CD4-positive, alpha-beta T cell (primary cell): ENCODE measurements at regions of chr19 and their contacts with region 1.

Region 1: GRCh38 chr19:15466851-15467733 is 2.7 kb upstream of the RASAL3 start:
- DNase-seq: peak in 13 of 14 experiments; percentile 31 to 87 (median 59)
- ATAC-seq: peak; percentile 43
- H3K4me3 ChIP-seq: no peak overlapping the region
- H3K4me3 Mint-ChIP-seq: peak overlapping the region; percentile 74
- H3K27ac ChIP-seq: peak overlapping the region; percentile 31 to 64
- H3K27ac Mint-ChIP-seq: peak overlapping the region; percentile 90
- H3K4me1 ChIP-seq: peaks cover 72% of the 10 kb centered on the region
- H3K4me1 Mint-ChIP-seq: peaks cover 58% of the 10 kb centered on the region
- H3K27me3 ChIP-seq: no peaks in the 10 kb centered on the region
- H3K27me3 Mint-ChIP-seq: no peaks in the 10 kb centered on the region
- CTCF ChIP-seq: no peak

Region 2: GRCh38 chr19:15404097-15404779 is 62.9 kb before region 1 on chr19:
- CTCF ChIA-PET with region 1: no interaction called
- POLR2A ChIA-PET with region 1: no interaction called
- intact Hi-C with region 1: no loop called
- DNase-seq: peak in 1 of 14 experiments; percentile 2
- ATAC-seq: no peak
- H3K4me3 ChIP-seq: no peak overlapping the region
- H3K4me3 Mint-ChIP-seq: no peak overlapping the region
- H3K27ac ChIP-seq: no peak overlapping the region
- H3K27ac Mint-ChIP-seq: no peak overlapping the region
- H3K4me1 ChIP-seq: peaks cover 6% of the 10 kb centered on the region
- H3K4me1 Mint-ChIP-seq: peaks cover 40% of the 10 kb centered on the region
- H3K27me3 ChIP-seq: no peaks in the 10 kb centered on the region
- H3K27me3 Mint-ChIP-seq: no peaks in the 10 kb centered on the region
- CTCF ChIP-seq: no peak

Region 3: GRCh38 chr19:15432629-15433518 is 34.2 kb before region 1 on chr19:
- CTCF ChIA-PET with region 1: interaction called, 4 read pairs
- POLR2A ChIA-PET with region 1: interaction called, 25 read pairs
- intact Hi-C with region 1: loop called in 1 of 2 experiments (anchors 1 kb)
- DNase-seq: peak; percentile 85 to 97 (median 92)
- ATAC-seq: peak; percentile 94
- H3K4me3 ChIP-seq: peak overlapping the region; percentile 87
- H3K4me3 Mint-ChIP-seq: peak overlapping the region; percentile 90
- H3K27ac ChIP-seq: peak overlapping the region; percentile 40 to 65
- H3K27ac Mint-ChIP-seq: peak overlapping the region; percentile 82
- H3K4me1 ChIP-seq: peaks cover 38% of the 10 kb centered on the region
- H3K4me1 Mint-ChIP-seq: peaks cover 28% of the 10 kb centered on the region
- H3K27me3 ChIP-seq: no peaks in the 10 kb centered on the region
- H3K27me3 Mint-ChIP-seq: no peaks in the 10 kb centered on the region
- CTCF ChIP-seq: no peak

Region 4: DNA sequence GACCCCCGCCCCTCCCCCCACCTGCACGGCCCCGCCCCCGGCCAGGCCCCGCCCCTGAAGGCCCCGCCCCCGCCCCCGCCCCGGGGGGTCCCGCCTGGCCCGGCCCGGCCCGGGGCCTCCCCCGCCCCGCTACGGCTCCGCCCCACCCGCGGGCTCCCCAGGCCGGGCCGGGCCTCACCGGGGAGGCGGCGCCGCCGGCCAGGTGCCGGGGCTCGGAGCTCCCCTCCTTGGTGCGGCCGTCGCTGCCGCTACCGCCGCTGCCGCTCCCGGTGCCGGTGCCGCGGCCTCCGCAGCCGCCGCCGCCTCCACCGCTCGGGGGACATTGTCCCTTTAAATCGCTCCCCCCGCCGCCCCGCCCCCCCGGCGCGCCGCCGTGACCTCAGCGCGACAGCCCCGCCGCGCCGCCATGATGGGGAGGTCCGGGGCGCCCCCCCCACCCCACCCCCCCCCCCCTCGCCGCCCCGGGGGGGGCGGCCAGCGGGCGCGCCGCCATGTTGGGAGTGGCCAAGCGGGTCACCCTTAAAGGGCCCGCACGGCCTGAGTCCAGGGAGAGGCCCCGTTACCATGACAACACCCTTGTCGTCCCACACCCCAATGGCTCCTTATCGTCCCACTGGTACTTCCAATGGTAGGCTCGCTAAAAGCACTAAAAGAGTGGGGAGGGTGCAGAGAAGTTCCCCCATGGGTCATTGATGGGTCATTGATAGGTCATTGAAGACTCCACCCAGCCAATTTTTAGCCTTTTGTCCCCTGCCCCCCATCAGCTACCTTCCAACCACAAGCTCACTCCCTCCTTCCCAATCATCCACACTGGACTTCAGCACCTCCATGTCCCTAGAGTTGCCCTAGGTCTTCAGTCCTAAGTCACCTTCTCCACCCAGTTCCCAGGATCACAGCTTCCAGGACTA is 17.2 kb before region 1 on chr19 and contains the start of gene WIZ:
- CTCF ChIA-PET with region 1: no interaction called
- POLR2A ChIA-PET with region 1: interaction called, 11 read pairs
- intact Hi-C with region 1: loop called in 1 of 2 experiments (anchors 2 kb)
- DNase-seq: peak; percentile 75 to 92 (median 84)
- ATAC-seq: peak; percentile 83
- H3K4me3 ChIP-seq: peak within 1 kb of the TSS; percentile 47
- H3K4me3 Mint-ChIP-seq: peak within 1 kb of the TSS; percentile 92
- H3K27ac ChIP-seq: peak within 1 kb of the TSS in 1 of 2 donors; percentile 79
- H3K27ac Mint-ChIP-seq: peak within 1 kb of the TSS; percentile 81
- H3K4me1 ChIP-seq: peaks cover 30% of the 10 kb centered on the region
- H3K4me1 Mint-ChIP-seq: peaks cover 30% of the 10 kb centered on the region
- H3K27me3 ChIP-seq: no peaks in the 10 kb centered on the region
- H3K27me3 Mint-ChIP-seq: no peaks in the 10 kb centered on the region
- CTCF ChIP-seq: no peak
- total RNA-seq, gene WIZ: 12.9 to 14.3 TPM

Region 5: DNA sequence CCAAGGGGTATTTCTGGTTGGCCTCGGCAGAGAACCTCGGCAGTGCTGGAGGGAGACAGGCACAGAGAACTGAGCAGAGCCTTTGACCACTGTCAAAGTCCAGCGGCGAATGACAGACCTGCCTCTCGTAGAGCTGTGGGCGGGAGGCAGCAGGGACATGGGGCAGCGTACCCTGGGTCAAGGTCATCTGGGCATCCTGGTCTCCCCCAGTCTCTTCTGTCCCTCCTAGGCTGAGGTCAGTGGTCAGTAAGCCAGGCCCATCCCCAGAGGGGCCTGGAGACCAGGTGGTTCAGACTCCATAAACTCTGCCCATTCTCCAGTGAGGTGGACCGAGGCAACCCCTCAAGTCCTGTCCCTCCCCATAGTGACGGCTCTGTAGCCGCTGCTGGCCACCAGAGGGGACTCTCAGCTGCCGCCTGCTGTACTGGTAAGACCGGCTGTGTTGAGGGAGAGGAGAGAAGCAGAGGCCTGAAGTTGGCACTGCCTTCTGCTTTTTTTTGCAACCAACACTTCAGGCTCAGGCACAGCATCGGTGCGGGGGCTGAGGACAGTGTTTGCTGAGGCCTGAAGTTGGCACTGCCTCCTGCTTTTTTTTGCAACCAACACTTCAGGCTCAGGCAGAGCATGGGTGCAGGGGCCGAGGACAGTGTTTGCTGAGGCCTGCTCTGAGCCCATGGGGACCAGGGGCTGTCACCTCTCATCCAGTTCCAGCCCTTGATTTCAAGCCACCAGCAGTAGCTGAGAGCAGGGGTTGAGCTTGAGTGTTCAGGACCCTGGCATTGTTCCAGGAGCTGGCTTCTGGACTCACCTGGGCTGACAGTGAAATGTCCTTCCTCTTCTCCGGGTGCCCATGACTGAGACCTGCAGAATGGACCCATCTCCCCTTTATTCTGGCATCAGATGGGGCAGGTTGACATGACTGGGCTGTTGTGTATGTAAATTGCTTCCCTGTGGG is 12.6 kb after region 1 on chr19 and contains the start of gene PGLYRP2:
- CTCF ChIA-PET with region 1: interaction called, 5 read pairs
- POLR2A ChIA-PET with region 1: interaction called, 17 read pairs
- intact Hi-C with region 1: no loop called
- DNase-seq: peak in 2 of 14 experiments; percentile 26 to 28
- ATAC-seq: peak; percentile 63
- H3K4me3 ChIP-seq: no peak within 1 kb of the TSS
- H3K4me3 Mint-ChIP-seq: peak within 1 kb of the TSS; percentile 27
- H3K27ac ChIP-seq: no peak within 1 kb of the TSS
- H3K27ac Mint-ChIP-seq: peak within 1 kb of the TSS; percentile 70
- H3K4me1 ChIP-seq: peaks cover 33% of the 10 kb centered on the region
- H3K4me1 Mint-ChIP-seq: peaks cover 37% of the 10 kb centered on the region
- H3K27me3 ChIP-seq: no peaks in the 10 kb centered on the region
- H3K27me3 Mint-ChIP-seq: no peaks in the 10 kb centered on the region
- CTCF ChIP-seq: no peak
- total RNA-seq, gene PGLYRP2: not detected

Region 6: DNA sequence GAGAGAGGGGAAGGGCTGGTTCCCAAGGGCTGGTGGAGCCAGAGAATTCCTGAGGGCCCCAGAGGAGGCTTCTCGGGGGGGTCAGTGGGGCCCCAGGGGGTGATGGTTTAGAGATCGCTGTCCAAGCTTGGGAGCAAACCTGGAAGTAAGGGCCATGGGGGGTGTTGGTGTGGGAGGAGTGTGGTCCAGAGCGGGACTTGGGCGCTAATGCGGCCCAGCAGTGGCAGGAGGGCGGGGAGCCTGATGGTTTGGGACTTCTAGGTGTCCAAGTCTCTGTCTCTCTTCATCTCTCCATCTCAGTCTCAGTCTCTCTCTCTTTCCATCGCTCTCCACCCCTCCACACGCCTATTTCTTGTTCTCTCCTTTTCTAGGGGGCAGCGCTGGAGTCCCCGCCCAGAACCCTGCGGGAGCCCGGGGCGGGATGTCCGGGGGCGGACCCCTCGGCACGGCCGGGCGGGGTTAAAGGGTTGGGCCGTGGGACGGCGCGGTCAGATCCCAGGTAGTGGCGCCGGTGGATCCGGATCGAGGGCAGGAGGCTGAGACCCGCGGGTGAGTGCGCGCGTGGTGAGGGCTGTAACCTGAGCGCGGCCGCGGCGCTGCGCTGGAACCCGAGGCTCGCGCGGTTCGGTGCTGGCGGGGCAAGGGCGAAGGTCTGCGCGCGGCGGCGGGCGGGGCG is 41.1 kb after region 1 on chr19 and contains the start of gene CYP4F22:
- CTCF ChIA-PET with region 1: no interaction called
- POLR2A ChIA-PET with region 1: interaction called, 3 read pairs
- intact Hi-C with region 1: loop called in 1 of 2 experiments (anchors 10 kb)
- DNase-seq: peak in 4 of 14 experiments; percentile 23 to 37 (median 28)
- ATAC-seq: peak; percentile 26
- H3K4me3 ChIP-seq: peak within 1 kb of the TSS; percentile 39
- H3K4me3 Mint-ChIP-seq: peak within 1 kb of the TSS; percentile 76
- H3K27ac ChIP-seq: no peak within 1 kb of the TSS
- H3K27ac Mint-ChIP-seq: no peak within 1 kb of the TSS
- H3K4me1 ChIP-seq: peaks cover 23% of the 10 kb centered on the region
- H3K4me1 Mint-ChIP-seq: peaks cover 22% of the 10 kb centered on the region
- H3K27me3 ChIP-seq: peaks cover 7 to 8% of the 10 kb centered on the region in 2 experiments
- H3K27me3 Mint-ChIP-seq: peaks cover 18% of the 10 kb centered on the region
- CTCF ChIP-seq: no peak
- total RNA-seq, gene CYP4F22: 0.19 to 0.28 TPM

Region 7: GRCh38 chr19:16018801-16019551 is 551.9 kb after region 1 on chr19:
- CTCF ChIA-PET with region 1: no interaction called
- POLR2A ChIA-PET with region 1: no interaction called
- intact Hi-C with region 1: no loop called
- DNase-seq: peak in 1 of 14 experiments; percentile 25
- ATAC-seq: no peak
- H3K4me3 ChIP-seq: no peak overlapping the region
- H3K4me3 Mint-ChIP-seq: no peak overlapping the region
- H3K27ac ChIP-seq: no peak overlapping the region
- H3K27ac Mint-ChIP-seq: no peak overlapping the region
- H3K4me1 ChIP-seq: no peaks in the 10 kb centered on the region
- H3K4me1 Mint-ChIP-seq: no peaks in the 10 kb centered on the region
- H3K27me3 ChIP-seq: no peaks in the 10 kb centered on the region
- H3K27me3 Mint-ChIP-seq: no peaks in the 10 kb centered on the region
- CTCF ChIP-seq: no peak